Activated B cell treated with CpG ODN at 0.5 μM for 24 hours (primary cell): ENCODE measurements at regions of chr18 and their contacts with region 1.

Region 1: DNA sequence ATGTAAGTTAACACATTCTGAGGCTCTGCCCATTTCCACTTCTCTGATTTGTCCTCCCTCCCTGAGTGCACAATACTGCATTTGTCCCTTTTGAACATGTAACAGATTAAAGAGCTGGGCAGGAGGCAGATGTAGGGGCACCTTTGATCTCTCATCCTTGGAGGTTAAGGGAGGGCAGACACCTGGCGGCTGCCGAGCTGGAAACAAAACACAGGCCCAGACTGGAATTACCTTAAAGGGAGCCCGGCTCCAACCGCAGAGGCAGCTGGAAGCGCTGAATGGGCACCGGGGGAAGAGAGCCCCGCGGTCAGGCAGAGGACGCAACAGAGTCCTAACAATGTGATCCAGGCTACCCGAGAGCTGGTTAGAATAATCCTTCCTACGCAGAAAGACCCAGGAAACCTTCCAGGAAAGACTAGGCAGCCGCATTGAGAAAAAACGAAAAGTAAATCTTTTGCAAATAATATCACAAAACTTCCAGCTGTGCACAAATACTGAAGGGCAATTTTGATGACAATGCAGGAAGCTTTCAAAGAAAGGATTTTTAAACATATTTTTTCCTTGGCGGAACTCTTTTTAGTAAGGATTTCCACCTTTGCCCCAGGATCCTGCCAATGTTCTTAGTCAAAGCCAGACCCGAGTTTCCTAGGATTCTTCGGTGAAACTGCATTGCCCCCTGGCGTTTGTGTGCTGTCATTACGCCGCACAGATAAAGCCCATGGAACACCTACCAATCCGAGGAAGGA is 216.0 kb downstream of the TGIF1 start:
- DNase-seq: peak; percentile 51
- ATAC-seq: peak; percentile 84
- H3K4me3 Mint-ChIP-seq: no peak overlapping the region
- H3K27ac Mint-ChIP-seq: no peak overlapping the region
- H3K4me1 Mint-ChIP-seq: peaks cover 21% of the 10 kb centered on the region
- H3K27me3 Mint-ChIP-seq: no peaks in the 10 kb centered on the region
- CTCF ChIP-seq: peak; percentile 83

Region 2: GRCh38 chr18:2932247-2933181 is 733.4 kb before region 1 on chr18:
- CTCF ChIA-PET with region 1: no interaction called
- POLR2A ChIA-PET with region 1: no interaction called
- intact Hi-C with region 1: loop called (anchors 1 kb)
- DNase-seq: no peak
- ATAC-seq: peak; percentile 66
- H3K4me3 Mint-ChIP-seq: no peak overlapping the region
- H3K27ac Mint-ChIP-seq: peak overlapping the region; percentile 76
- H3K4me1 Mint-ChIP-seq: peaks cover 8% of the 10 kb centered on the region
- H3K27me3 Mint-ChIP-seq: no peaks in the 10 kb centered on the region
- CTCF ChIP-seq: peak; percentile 49

Region 3: DNA sequence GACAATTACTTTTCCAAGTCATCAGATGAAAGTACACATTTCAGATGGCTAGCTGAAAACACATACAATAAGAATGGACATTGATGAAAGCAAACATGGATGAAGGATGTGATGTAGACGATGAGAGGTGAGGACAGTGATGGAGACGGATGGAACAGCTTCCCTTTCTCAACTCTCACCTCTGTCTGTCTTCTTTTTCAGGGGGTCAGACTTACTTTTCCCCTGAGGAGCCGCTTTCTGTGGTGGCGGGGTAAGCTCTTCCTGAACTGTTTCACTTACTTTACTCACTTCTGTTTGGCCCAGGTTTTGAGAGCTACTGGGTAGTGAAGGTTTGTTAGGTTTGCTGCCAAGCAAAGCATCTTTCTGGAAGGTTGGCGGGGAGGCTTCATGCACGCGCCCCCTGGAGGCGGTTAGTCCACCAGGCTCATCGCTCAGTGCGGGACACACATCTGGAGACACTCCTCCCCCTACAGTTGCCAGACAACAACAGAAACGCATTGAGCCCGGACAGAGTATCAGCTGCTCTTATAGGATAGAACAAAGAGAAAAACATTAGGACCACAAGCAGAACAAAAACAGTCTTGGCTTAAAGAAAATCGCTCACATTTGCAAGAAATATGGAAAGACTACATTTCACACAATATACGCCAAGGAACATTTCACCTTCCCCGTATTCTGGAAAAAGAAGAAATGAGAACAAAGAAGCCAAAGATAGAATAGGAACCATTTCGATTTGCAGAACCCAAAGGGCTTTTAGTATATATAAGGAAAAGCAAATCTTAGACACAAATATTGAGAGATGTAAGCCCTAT is 536.7 kb before region 1 on chr18:
- CTCF ChIA-PET with region 1: no interaction called
- POLR2A ChIA-PET with region 1: no interaction called
- intact Hi-C with region 1: loop called (anchors 2 kb)
- DNase-seq: peak; percentile 59
- ATAC-seq: peak; percentile 99
- H3K4me3 Mint-ChIP-seq: no peak overlapping the region
- H3K27ac Mint-ChIP-seq: no peak overlapping the region
- H3K4me1 Mint-ChIP-seq: peaks cover 6% of the 10 kb centered on the region
- H3K27me3 Mint-ChIP-seq: no peaks in the 10 kb centered on the region
- CTCF ChIP-seq: peak; percentile 16

Region 4: GRCh38 chr18:3321133-3321812 is 344.7 kb before region 1 on chr18:
- CTCF ChIA-PET with region 1: interaction called, 16 read pairs
- POLR2A ChIA-PET with region 1: interaction called, 4 read pairs
- intact Hi-C with region 1: no loop called
- DNase-seq: no peak
- ATAC-seq: no peak
- H3K4me3 Mint-ChIP-seq: no peak overlapping the region
- H3K27ac Mint-ChIP-seq: no peak overlapping the region
- H3K4me1 Mint-ChIP-seq: peaks cover 24% of the 10 kb centered on the region
- H3K27me3 Mint-ChIP-seq: no peaks in the 10 kb centered on the region
- CTCF ChIP-seq: no peak

Region 5: DNA sequence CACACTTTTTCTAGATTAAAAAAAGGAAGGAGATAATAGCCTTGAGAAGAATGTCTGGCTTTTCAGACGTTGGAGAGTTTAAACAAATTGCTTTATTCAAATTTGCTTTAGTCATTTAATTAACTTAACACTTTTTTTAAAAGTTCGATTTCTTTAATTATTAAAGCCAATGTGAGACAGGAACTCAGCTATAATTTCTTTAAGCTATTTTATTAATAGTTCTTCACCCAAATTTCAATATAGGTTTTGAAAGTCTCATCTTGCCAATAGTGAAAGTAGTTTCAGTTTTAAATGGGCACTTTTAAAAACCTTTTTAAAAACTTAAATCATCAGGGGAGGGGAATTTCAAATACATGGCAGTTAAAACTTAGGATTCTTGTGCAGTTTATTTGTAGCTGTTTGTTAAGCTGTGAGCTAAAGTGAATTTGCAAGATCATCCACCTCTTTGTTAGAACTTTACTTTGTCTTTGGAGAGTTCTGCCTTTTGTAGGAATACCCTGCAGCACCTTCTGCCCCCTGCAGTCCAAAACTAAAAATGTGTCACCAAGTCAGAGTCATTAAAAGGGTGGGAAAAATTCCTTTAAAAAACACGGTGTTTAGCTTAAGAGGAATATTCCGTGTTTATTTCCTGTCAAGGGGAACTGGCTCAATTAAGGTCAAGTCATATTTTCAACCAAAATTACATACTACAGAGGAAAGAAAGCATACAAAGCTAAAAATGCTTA is 211.4 kb before region 1 on chr18:
- CTCF ChIA-PET with region 1: interaction called, 60 read pairs
- POLR2A ChIA-PET with region 1: interaction called, 26 read pairs
- intact Hi-C with region 1: loop called (anchors 1 kb)
- DNase-seq: no peak
- ATAC-seq: no peak
- H3K4me3 Mint-ChIP-seq: peak overlapping the region; percentile 93
- H3K27ac Mint-ChIP-seq: peak overlapping the region; percentile 95
- H3K4me1 Mint-ChIP-seq: peaks cover 57% of the 10 kb centered on the region
- H3K27me3 Mint-ChIP-seq: no peaks in the 10 kb centered on the region
- CTCF ChIP-seq: no peak

Region 6: GRCh38 chr18:3631887-3632286 is 34.1 kb before region 1 on chr18:
- CTCF ChIA-PET with region 1: interaction called, 13 read pairs
- POLR2A ChIA-PET with region 1: no interaction called
- intact Hi-C with region 1: no loop called
- DNase-seq: no peak
- ATAC-seq: no peak
- H3K4me3 Mint-ChIP-seq: no peak overlapping the region
- H3K27ac Mint-ChIP-seq: no peak overlapping the region
- H3K4me1 Mint-ChIP-seq: peaks cover 20% of the 10 kb centered on the region
- H3K27me3 Mint-ChIP-seq: no peaks in the 10 kb centered on the region
- CTCF ChIP-seq: no peak

Region 7: DNA sequence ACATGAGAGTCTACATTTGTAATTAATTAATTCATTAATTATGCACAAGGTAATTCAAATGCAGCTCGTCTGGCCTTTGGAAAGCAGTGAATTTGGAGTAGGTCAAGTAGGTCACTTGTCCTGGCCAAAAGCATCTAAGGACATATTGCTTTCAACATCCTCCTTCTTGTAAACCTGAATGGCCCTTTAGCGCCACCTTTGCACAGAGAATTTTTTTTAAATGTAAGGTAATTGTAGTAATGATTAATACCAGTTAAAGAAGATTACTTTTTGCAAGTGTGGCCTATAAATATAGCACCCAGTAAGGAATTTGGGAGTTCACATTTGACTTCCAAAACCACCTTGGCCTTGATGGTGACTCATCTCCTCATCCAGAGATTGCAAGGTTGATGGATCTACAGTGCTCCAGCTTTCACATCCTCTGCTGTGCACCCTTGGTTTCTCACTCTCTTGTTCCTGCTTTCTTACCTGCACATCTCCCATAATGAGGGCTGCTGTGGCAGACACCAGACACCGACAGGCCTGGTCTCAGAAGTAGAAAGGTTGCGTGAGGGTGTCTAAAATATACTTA is 265.7 kb after region 1 on chr18:
- CTCF ChIA-PET with region 1: no interaction called
- POLR2A ChIA-PET with region 1: no interaction called
- intact Hi-C with region 1: no loop called
- DNase-seq: no peak
- ATAC-seq: no peak
- H3K4me3 Mint-ChIP-seq: no peak overlapping the region
- H3K27ac Mint-ChIP-seq: no peak overlapping the region
- H3K4me1 Mint-ChIP-seq: no peaks in the 10 kb centered on the region
- H3K27me3 Mint-ChIP-seq: no peaks in the 10 kb centered on the region
- CTCF ChIP-seq: no peak